ENCODE measurements at regions of chr5 and their contacts with region 1.

Region 1: DNA sequence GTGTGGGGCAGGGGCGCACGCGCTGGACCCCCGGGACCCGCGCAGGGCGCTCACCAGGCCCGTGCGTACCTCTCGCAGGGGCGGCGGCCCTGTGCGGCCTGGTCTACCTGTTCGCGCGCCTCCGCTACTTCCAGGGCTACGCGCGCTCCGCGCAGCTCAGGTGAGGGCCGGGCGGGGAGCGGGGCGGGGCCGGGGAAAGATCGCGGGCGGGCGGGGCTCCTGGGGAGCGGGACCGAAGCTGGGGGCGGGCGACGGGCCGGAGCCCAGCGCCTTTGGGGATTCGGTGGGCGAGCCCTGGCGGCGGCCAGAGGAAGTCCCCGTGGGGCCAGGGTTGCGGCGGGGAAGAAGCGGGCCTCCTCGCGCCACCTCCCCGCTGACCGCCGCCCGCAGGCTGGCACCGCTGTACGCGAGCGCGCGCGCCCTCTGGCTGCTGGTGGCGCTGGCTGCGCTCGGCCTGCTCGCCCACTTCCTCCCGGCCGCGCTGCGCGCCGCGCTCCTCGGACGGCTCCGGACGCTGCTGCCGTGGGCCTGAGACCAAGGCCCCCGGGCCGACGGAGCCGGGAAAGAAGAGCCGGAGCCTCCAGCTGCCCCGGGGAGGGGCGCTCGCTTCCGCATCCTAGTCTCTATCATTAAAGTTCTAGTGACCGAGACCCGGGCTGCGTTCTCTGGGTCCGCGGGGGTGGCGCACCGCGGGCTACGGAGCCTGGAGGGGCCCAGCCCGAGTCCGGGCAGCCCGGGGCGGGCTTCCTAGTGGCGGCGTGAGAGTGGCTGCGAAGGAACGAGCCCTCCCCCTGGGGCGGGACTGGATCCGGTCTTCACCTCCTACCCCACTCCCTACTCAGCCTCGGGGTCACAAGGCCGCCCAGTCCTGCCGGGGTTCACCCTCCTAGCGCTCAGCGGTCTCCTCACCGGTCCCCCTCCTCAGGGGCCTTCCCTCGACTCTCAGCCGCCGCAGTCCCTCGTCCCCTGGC is 2.4 kb downstream of the LTC4S start:
- DNase-seq: no peak
- ATAC-seq: peak; percentile 86
- H3K4me3 ChIP-seq: peak overlapping the region; percentile 55 to 65
- H3K27ac ChIP-seq: peak overlapping the region; percentile 89
- H3K4me1 ChIP-seq: peaks cover 9% of the 10 kb centered on the region
- H3K27me3 ChIP-seq: no peaks in the 10 kb centered on the region
- CTCF ChIP-seq: peak; percentile 95

Region 2: DNA sequence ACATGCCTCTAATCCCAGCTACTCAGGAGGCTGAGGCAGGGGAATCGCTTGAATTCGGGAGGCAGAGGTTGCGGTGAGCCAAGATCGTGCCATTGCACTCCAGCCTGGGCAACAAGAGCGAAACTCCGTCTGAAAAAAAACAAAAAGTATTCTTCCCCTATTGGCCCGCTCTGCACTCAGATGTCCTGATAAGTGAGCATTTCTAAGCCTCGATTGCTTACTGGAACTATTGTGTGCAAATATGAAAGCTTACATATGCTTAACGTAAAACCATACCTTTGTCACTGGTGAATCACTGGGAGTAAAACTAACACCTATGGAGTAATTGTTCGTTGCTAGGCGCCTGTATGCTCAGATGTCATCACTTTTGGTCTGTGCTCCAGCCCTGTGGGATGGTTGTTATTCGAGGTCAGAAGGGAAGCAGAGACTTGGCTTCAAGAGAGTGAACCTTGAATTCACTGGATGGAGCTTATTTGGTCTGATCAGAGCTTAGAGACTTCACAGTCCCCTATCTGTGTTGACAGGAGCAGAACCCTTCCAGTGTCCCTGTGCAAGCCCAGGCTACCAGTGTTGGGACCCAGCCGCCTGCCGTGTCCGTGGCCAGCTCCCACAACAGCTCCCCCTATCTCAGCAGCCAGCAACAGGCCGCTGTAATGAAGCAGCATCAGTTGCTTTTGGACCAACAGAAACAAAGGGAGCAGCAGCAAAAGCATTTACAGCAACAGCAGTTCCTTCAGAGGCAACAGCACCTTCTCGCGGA is 27.6 kb before region 1 on chr5:
- CTCF ChIA-PET with region 1: interaction called, 4 read pairs
- POLR2A ChIA-PET with region 1: interaction called, 15 read pairs
- in situ Hi-C with region 1: no loop called
- intact Hi-C with region 1: no loop called
- DNase-seq: no peak
- ATAC-seq: no peak
- H3K4me3 ChIP-seq: no peak overlapping the region
- H3K27ac ChIP-seq: no peak overlapping the region
- H3K4me1 ChIP-seq: peaks cover 16% of the 10 kb centered on the region
- H3K27me3 ChIP-seq: no peaks in the 10 kb centered on the region
- CTCF ChIP-seq: no peak

Region 3: GRCh38 chr5:179780362-179780761 is 15.8 kb before region 1 on chr5:
- CTCF ChIA-PET with region 1: interaction called, 10 read pairs
- POLR2A ChIA-PET with region 1: interaction called, 3 read pairs
- in situ Hi-C with region 1: no loop called
- intact Hi-C with region 1: no loop called
- DNase-seq: no peak
- ATAC-seq: no peak
- H3K4me3 ChIP-seq: no peak overlapping the region
- H3K27ac ChIP-seq: no peak overlapping the region
- H3K4me1 ChIP-seq: no peaks in the 10 kb centered on the region
- H3K27me3 ChIP-seq: no peaks in the 10 kb centered on the region
- CTCF ChIP-seq: no peak